Thyroid gland (tissue), 4 donors: ENCODE measurements at regions of chr19 and their contacts with region 1.

Region 1: DNA sequence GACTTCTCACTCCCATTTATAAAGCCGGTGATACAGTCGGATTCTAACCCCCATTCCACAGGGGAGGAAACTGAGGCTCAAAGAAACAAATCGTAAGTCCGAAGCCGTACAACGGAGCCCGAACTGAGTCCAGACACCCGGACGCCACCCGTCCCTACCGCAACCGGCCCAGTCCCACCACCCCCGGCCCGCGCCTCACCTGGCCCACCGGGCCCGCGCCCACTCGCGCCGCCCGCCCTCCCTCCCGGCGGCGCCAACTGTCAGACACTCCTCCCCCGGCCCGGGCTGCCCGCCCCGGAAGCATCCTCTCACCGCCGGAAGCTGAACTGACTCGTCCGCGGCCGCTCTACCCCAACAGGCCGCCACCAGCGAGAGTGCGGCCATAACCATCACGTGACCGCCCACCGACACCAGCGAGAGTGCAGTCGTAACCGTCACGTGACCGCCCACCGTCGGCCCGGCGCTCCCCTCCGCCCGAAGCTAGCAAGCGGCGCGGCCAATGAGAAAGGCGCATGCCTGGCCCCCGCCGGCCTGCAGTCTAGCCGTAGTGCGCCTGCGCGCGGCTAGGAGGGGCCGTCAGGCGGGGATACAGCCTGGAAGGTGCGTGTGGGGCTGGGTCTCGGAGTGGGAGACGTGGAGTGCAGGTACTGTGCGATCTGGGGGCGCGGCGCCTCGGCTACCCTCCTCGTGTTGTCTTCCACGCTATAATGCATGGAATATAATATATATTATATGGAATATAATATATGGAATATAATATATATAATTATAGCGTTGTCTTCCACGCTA is at the starts of genes C19orf47 and PLD3:
- DNase-seq: peak; percentile 100
- H3K4me3 ChIP-seq: peak within 1 kb of the TSS; percentile 48 to 80 (median 63)
- H3K27ac ChIP-seq: peak within 1 kb of the TSS; percentile 32 to 70 (median 38)
- H3K4me1 ChIP-seq: peaks cover 9 to 17% of the 10 kb centered on the region in 2 donors
- H3K27me3 ChIP-seq: no peaks in the 10 kb centered on the region
- CTCF ChIP-seq: peak in 1 of 6 experiments; percentile 42
- POLR2A ChIP-seq: peak in 1 of 2 donors; percentile 83
- total RNA-seq, gene C19orf47: 9.4 to 17.3 (median 17.2) TPM
- total RNA-seq, gene PLD3: 151 to 258 (median 244) TPM

Region 2: GRCh38 chr19:40119380-40119779 is 228.9 kb before region 1 on chr19:
- intact Hi-C with region 1: no loop called
- DNase-seq: no peak
- H3K4me3 ChIP-seq: no peak overlapping the region
- H3K27ac ChIP-seq: no peak overlapping the region
- H3K4me1 ChIP-seq: no peaks in the 10 kb centered on the region
- H3K27me3 ChIP-seq: no peaks in the 10 kb centered on the region
- CTCF ChIP-seq: no peak
- POLR2A ChIP-seq: no peak

Region 3: GRCh38 chr19:40315812-40316475 is 32.4 kb before region 1 on chr19:
- intact Hi-C with region 1: no loop called
- DNase-seq: no peak
- H3K4me3 ChIP-seq: no peak overlapping the region
- H3K27ac ChIP-seq: no peak overlapping the region
- H3K4me1 ChIP-seq: no peaks in the 10 kb centered on the region
- H3K27me3 ChIP-seq: no peaks in the 10 kb centered on the region
- CTCF ChIP-seq: no peak
- POLR2A ChIP-seq: no peak

Region 4: GRCh38 chr19:40407714-40408597 is 59.6 kb after region 1 on chr19:
- intact Hi-C with region 1: loop called (anchors 5 kb)
- DNase-seq: no peak
- H3K4me3 ChIP-seq: no peak overlapping the region
- H3K27ac ChIP-seq: no peak overlapping the region
- H3K4me1 ChIP-seq: peaks cover 16 to 28% of the 10 kb centered on the region in 2 donors
- H3K27me3 ChIP-seq: no peaks in the 10 kb centered on the region
- CTCF ChIP-seq: no peak
- POLR2A ChIP-seq: no peak

Region 5: GRCh38 chr19:40444192-40445028 is 96.1 kb after region 1 on chr19 and contains the start of gene SERTAD3:
- intact Hi-C with region 1: loop called (anchors 10 kb)
- DNase-seq: peak; percentile 98
- H3K4me3 ChIP-seq: peak within 1 kb of the TSS; percentile 38 to 99 (median 74)
- H3K27ac ChIP-seq: peak within 1 kb of the TSS; percentile 92 to 98 (median 94)
- H3K4me1 ChIP-seq: peaks cover 8 to 28% of the 10 kb centered on the region in 2 donors
- H3K27me3 ChIP-seq: no peaks in the 10 kb centered on the region
- CTCF ChIP-seq: peak in 2 of 6 experiments; percentile 4 to 11
- POLR2A ChIP-seq: peak; percentile 92 to 99
- total RNA-seq, gene SERTAD3: 15.6 to 25.2 (median 20.4) TPM